Left colon (tissue), 2 donors: ENCODE measurements at regions of chr10 and their contacts with region 1.

Region 1: DNA sequence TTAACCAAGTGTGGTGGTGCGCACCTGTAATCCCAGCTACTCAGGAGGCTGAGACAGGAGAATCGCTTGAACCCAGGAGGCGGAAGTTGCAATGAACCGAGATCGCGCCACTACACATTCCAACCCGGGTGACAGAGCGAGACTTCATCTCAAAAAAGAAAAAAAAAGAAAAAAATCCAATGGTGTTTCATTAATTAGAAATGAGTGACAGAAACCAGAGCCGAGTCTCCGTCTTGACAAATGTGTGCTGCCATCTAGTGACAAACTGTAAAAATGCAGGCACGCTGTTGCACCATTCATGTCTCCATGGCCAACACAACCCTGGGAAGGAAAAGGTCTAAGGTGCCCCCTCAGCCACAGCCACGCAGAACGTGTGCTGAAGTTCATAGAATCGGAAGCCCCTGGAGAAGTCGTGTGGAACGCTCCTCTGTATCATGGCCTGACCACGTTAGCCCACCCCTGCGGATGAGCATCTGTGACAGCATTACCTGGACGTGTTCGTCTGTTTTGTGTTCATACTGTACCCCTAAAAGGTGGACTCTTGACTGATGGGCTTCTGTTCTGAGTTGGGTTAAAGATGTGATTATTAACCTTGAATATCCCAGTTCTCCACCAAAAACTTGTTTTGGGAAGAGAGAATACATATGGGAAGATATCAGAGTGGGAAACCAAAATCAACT is 94.9 kb downstream of the LYZL2 start:
- DNase-seq: peak; percentile 41 to 74
- ATAC-seq: peak; percentile 75

Region 2: DNA sequence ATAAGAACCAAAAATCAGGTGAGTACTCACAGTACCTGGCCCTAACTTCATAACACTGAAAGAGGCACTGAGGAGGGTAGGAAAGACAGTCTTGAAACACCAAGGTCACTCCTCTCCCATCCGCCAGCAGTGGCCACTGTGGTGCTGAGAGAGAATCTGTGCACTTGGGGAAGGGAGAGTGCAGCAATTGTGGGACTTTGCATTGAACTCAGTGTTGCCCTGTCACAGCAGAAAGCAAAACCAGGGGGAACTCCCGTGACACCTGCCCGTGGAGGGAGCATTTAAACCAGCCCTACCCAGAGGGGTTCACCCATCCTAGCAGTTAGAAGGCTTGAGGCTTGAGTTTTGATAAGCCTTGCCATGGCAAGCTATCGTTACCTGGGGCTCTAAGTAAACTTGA is 135.8 kb before region 1 on chr10:
- intact Hi-C with region 1: loop called in 1 of 2 experiments (anchors 5 kb)
- DNase-seq: no peak
- ATAC-seq: no peak

Region 3: GRCh38 chr10:30413996-30414576 is 120.5 kb before region 1 on chr10:
- intact Hi-C with region 1: loop called (anchors 2 to 10 kb)
- DNase-seq: no peak
- ATAC-seq: peak; percentile 82

Region 4: DNA sequence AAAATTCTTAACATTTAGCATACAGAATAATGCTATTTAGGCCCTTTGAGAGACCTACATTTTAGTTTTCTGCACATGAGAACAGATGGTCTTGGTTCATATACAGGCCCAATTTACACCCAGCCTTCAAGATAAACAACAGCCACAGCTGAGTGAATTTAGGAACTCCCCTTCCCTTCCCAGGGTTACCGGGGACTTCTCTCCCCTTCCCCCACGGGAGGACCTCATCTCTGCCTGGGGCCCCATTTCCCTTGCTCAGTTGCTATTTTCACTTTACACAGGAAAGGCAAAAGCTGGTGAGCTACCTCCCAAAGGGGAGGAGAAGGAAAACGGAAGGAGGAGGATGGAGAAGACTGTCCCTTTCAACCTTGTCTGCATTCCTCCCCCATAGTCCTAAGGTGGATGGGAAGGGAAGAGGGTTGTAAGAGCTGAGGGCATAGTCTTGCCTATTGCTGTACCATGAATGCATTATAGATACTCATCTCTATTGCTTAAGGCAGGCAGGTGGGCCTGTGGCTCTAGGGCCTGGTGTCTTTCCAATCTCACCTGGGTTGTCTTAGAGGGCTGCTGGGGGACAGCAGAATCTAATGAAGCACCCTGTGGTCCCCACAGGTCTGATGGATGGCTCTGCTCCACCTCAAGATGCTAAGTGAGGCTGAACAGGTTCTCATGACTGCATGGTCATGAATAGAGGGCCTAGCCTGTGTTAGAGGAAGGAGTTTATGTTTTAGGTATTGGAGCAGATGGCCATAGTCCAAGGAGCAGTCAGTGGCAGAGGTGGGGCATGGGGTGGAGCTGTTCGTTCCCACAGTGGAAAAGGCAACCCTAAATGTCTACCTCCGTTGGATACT is 106.9 kb before region 1 on chr10:
- intact Hi-C with region 1: no loop called
- DNase-seq: peak; percentile 55 to 56
- ATAC-seq: peak; percentile 77